ENCODE measurements at regions of chr15 and their contacts with region 1.

Region 1: DNA sequence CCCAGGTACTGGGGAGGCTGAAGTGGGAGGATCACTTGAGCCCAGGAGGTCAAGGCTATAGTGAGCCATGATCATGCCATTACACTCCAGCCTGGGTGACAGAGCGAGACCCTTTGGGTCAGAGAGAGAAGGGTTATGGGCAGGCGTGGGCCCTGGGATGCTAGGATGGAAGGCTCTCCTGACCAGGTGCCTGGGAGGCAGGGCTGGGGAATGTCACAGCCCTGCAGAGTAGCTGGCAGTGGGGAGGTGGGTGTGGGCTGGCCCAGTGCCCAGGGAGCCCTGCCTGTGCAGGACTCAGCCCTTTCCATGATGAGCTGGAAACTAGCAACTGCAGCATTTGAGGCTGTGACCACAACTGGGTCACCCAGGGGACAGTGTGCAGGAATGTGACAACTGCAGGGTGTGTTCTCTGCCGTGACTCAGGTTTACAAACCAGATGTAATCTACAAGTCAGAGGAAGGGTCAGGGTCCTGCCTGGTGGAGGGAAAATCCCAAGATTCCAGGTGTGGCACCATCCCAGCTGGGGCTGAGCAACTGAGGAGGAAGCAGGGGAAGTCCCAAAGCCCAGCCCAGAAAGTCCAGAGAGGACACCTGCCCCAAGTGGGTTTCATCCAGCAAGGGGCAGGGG is 45.4 kb downstream of the SLC28A1 start:
- DNase-seq: peak; percentile 52
- H3K4me3 Mint-ChIP-seq: no peak overlapping the region
- H3K27ac Mint-ChIP-seq: no peak overlapping the region
- H3K4me1 Mint-ChIP-seq: peaks cover 20% of the 10 kb centered on the region
- H3K27me3 Mint-ChIP-seq: no peaks in the 10 kb centered on the region
- CTCF ChIP-seq: no peak

Region 2: DNA sequence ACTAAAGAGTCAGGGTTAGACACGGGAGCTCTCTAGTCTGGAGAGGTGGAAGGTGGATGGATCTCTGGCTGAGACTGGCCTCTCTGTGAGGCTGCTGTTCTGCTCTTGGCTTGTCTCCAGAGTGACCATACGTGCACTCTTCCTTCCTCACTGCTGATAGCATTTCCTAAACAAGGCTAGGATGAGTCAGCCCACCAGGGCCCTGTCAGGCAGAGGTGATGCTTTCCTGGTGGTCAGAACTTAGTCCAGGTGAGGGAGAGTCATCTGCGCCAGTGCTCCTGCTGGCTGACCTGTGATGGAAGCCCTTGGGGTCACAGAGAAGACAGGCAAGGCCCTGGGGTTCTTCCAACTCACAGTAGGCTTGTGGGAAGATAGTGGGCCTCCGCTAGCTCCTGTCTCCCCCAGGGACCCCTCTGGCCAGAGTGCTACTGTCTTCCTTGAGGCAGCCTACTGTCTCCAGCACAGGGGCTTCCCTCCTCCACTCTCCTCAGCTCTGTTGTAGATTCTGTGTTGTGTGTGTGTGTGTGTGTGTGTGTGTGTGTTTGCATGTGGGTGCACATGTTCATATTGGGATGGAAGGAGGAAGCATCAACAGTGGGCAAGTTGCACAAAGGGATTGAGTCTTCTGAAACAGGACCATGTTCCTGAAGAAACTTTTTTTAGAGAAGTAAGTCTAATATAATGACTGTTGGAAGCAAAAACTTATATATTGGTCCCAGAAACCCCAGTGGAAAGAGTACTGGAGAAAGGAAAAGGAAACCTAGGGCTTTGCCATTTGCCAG is 96.2 kb before region 1 on chr15:
- CTCF ChIA-PET with region 1: interaction called, 11 read pairs
- POLR2A ChIA-PET with region 1: no interaction called
- intact Hi-C with region 1: no loop called
- DNase-seq: peak; percentile 22
- H3K4me3 Mint-ChIP-seq: no peak overlapping the region
- H3K27ac Mint-ChIP-seq: no peak overlapping the region
- H3K4me1 Mint-ChIP-seq: no peaks in the 10 kb centered on the region
- H3K27me3 Mint-ChIP-seq: peaks cover 37% of the 10 kb centered on the region
- CTCF ChIP-seq: no peak

Region 3: DNA sequence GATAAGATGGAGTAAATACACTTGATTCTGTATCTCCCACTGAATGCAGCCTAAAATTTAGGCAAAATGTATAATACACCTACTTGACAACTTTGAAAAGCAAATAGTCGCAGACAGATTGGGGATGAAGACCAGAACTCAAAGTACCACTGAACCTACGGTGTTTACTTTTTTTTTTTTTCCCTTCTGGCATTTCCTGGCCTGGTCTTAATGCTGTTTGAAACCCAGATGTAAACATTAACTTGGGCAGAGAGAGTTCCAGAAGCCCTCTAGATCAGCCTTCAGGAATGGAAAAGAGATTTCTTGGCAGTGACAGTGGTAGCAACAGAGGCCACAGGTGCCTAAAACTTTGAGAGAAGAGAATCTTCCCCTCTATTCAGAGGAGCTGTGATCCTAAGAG is 84.9 kb before region 1 on chr15:
- CTCF ChIA-PET with region 1: interaction called, 11 read pairs
- POLR2A ChIA-PET with region 1: interaction called, 3 read pairs
- intact Hi-C with region 1: loop called (anchors 2 kb)
- DNase-seq: no peak
- H3K4me3 Mint-ChIP-seq: no peak overlapping the region
- H3K27ac Mint-ChIP-seq: no peak overlapping the region
- H3K4me1 Mint-ChIP-seq: no peaks in the 10 kb centered on the region
- H3K27me3 Mint-ChIP-seq: peaks cover 16% of the 10 kb centered on the region
- CTCF ChIP-seq: no peak

Measured in MCF 10A (cell line).